Dorsolateral prefrontal cortex (tissue), 120 donors: ENCODE measurements at regions of chr5 and their contacts with region 1.

Region 1: DNA sequence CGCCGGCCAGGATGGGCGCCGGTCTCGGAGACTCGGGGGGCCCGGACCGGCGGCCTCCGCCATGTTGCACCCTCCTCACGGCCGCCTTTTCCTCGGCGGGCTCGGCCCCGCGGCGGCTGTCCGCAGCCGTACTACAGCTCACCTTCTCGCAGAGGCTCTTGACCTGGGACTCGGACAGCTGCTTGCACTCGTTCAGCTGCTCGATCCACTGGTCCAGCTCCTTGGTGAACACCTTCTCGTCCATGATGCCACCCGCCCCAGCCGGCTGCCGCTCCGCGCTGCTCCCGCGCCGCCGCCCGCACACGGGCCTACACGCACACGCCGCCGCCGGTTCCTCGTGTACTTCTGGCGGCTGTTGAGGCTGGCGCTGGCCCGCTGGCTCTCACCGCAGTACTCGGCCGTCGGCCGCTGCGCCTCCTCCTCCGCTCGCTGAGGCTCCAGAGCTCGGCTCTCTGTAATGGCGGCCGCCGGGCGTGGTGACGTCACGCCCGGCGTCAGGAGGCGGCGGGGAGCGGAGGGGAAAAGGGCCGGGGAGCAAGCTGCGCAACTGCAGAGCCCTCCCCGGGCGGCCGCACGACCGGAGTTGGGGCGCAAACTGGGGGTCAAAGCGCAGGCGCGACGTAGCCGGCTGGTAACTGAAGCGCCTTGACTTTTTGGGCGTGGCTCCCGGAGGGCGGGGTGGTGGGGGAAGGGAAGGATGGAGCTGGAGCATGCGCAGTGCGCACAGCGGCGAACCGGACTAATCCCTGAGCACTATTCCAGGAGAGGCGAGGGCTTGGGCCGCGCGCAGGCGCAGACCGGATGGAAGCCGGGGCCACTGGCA is at the start of gene PPP2CA:
- DNase-seq: peak; percentile 96 to 99 (median 98)
- H3K4me3 ChIP-seq: peak within 1 kb of the TSS; percentile 76 to 100 (median 98)
- H3K27ac ChIP-seq: peak within 1 kb of the TSS; percentile 96 to 100 (median 99)
- H3K27me3 ChIP-seq: no peaks in the 10 kb centered on the region
- CTCF ChIP-seq: peak in 26 of 56 donors; percentile 2 to 41 (median 18)
- total RNA-seq, gene PPP2CA: 82.2 to 254 (median 188) TPM

Region 2: GRCh38 chr5:134113902-134114875 is 111.6 kb before region 1 on chr5 and contains the start of gene TCF7:
- intact Hi-C with region 1: no loop called
- DNase-seq: peak in 3 of 10 donors; percentile 26 to 62 (median 56)
- H3K4me3 ChIP-seq: peak within 1 kb of the TSS; percentile 31 to 75 (median 60)
- H3K27ac ChIP-seq: peak within 1 kb of the TSS in 1 of 59 donors; percentile 46
- H3K27me3 ChIP-seq: peaks cover 0 to 16% (median 0%) of the 10 kb centered on the region in 45 donors
- CTCF ChIP-seq: peak in 2 of 56 donors; percentile 7 to 13
- total RNA-seq, gene TCF7: 0.75 to 9.0 (median 2.3) TPM

Region 3: DNA sequence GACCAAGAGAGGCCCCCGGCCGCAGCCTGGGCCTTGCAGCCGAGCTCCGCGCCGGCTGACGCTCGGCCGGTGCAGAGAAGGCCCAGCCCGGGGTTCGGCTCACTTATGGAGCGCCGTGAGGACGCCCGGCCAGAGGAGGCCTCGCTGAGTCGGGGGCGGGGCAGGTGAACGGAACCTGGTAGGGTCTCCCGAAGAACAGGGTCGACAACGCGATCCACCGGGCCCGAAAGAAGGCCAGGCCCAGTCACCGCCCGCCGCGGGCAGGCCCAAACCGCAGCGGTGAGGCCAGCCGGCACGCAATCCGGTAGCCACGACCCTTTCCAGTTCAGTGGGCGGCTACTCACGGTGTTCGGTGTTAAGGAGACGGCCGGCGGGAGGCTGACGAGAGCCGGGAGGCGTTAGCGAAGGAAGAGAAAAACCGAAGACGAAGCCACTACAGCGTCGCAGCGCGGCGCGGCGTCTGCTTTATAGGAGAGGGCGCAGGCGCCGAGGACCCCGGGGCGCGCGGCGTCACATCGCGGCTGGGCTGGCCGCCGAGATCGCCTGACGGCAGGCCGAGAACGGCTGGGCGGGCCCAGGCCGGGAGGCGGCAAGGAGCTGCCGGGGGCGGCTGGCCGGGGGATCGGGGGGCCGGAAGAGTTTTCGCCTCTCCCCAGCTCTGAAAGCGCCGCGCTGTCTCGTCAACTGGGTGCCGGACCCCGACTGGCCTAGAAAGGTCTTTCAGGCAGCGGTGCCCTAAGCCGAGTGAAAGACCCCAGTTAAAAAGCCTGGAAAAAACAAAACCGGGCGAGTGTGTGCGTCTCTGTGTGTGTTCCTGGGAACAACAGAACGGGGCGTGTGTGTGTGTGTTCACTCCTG is 49.1 kb before region 1 on chr5 and contains the start of gene SKP1:
- intact Hi-C with region 1: loop called (anchors 2 to 5 kb)
- DNase-seq: peak; percentile 66 to 89 (median 78)
- H3K4me3 ChIP-seq: peak within 1 kb of the TSS; percentile 58 to 99 (median 93)
- H3K27ac ChIP-seq: peak within 1 kb of the TSS; percentile 82 to 100 (median 98)
- H3K27me3 ChIP-seq: no peaks in the 10 kb centered on the region
- CTCF ChIP-seq: peak in 15 of 56 donors; percentile 11 to 51 (median 23)
- total RNA-seq, gene SKP1: 263 to 693 (median 535) TPM

Region 4: DNA sequence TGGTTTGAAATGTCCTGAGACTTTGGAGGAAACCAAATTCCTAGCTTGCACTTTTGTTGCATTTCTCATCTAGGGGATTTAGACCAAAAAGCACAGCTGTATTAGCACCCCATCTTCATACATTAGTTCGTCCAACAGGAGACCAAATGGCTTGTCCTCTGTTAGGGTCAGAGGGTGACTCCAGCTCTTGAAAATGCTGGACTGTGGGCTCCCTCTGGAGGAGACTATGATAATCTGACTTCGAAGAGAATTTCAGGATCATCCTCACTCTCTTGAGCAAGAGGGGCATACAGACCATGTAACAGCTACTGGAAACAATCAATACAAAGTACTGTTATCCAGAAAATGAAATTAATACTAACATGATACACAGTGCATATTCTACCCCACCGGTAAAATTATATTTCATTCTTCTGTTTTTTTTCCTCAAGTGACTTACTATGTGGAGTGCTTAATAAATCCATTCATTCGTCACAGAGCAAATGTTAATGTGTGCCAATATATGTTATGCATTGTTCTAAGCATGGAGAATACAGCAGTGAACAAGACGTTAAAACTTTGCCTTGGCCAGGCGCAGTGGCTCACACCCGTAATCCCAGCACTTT is 63.8 kb after region 1 on chr5:
- intact Hi-C with region 1: loop called (anchors 5 kb)
- DNase-seq: peak in 5 of 10 donors; percentile 16 to 55 (median 44)
- H3K4me3 ChIP-seq: no peak overlapping the region
- H3K27ac ChIP-seq: no peak overlapping the region
- H3K27me3 ChIP-seq: no peaks in the 10 kb centered on the region
- CTCF ChIP-seq: peak; percentile 53 to 94 (median 78)